Brain microvascular endothelial cell (primary cell): ENCODE measurements at regions of chr16 and their contacts with region 1.

Region 1: GRCh38 chr16:55842369-55843104 is 9.6 kb upstream of the CES1 start:
- DNase-seq: peak; percentile 23
- H3K4me3 ChIP-seq: no peak overlapping the region
- H3K27ac ChIP-seq: no peak overlapping the region
- H3K27me3 ChIP-seq: no peaks in the 10 kb centered on the region
- CTCF ChIP-seq: peak; percentile 74

Region 2: DNA sequence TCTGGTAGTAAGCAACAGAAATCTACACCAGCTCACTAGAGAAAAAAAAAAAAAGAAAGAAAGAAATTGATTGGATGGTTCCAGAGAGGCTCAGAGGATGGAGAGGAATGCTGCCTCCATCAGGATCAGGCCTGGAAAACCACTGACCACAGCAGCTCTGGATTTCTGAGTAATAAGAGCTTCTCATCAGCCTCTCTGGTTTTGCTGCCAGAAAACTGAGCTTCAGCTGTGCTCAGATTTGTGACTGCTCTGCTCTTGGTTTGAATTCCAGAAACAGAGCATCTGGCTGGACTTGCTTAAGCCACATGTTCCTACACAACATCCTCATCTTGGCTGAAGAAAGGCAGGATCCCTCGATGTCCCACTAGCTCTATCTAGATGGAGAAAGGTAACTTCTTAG is 492.7 kb before region 1 on chr16:
- in situ Hi-C with region 1: no loop called
- DNase-seq: no peak
- H3K4me3 ChIP-seq: no peak overlapping the region
- H3K27ac ChIP-seq: no peak overlapping the region
- H3K27me3 ChIP-seq: no peaks in the 10 kb centered on the region
- CTCF ChIP-seq: no peak

Region 3: GRCh38 chr16:55444754-55445485 is 397.6 kb before region 1 on chr16:
- in situ Hi-C with region 1: loop called (anchors 25 kb)
- DNase-seq: no peak
- H3K4me3 ChIP-seq: no peak overlapping the region
- H3K27ac ChIP-seq: no peak overlapping the region
- H3K27me3 ChIP-seq: no peaks in the 10 kb centered on the region
- CTCF ChIP-seq: no peak

Region 4: GRCh38 chr16:56237451-56237930 is 395.0 kb after region 1 on chr16:
- in situ Hi-C with region 1: no loop called
- DNase-seq: no peak
- H3K4me3 ChIP-seq: no peak overlapping the region
- H3K27ac ChIP-seq: no peak overlapping the region
- H3K27me3 ChIP-seq: no peaks in the 10 kb centered on the region
- CTCF ChIP-seq: no peak